Naive thymus-derived CD4-positive, alpha-beta T cell (primary cell): ENCODE measurements at regions of chr1 and their contacts with region 1.

Region 1: GRCh38 chr1:23634842-23635651 is 56.6 kb upstream of the RPL11 start:
- DNase-seq: peak in 8 of 9 donors; percentile 48 to 80 (median 72)
- ATAC-seq: peak; percentile 91
- H3K4me3 ChIP-seq: peak overlapping the region; percentile 42
- H3K4me3 Mint-ChIP-seq: peak overlapping the region; percentile 64 to 81 (median 75)
- H3K27ac ChIP-seq: peak overlapping the region; percentile 69
- H3K27ac Mint-ChIP-seq: peak overlapping the region; percentile 69 to 97 (median 93)
- H3K4me1 ChIP-seq: peaks cover 0 to 14% of the 10 kb centered on the region in 2 donors
- H3K4me1 Mint-ChIP-seq: peaks cover 18 to 52% (median 40%) of the 10 kb centered on the region in 7 donors
- H3K27me3 ChIP-seq: no peaks in the 10 kb centered on the region
- H3K27me3 Mint-ChIP-seq: peaks cover 0 to 4% (median 0%) of the 10 kb centered on the region in 5 donors

Region 2: GRCh38 chr1:23484253-23485001 is 150.6 kb before region 1 on chr1:
- CTCF ChIA-PET with region 1: interaction called, 6 read pairs
- POLR2A ChIA-PET with region 1: interaction called, 3 read pairs
- intact Hi-C with region 1: loop called in 1 of 2 experiments (anchors 5 kb)
- DNase-seq: peak; percentile 76 to 92 (median 90)
- ATAC-seq: peak; percentile 94
- H3K4me3 ChIP-seq: peak overlapping the region; percentile 67
- H3K4me3 Mint-ChIP-seq: peak overlapping the region; percentile 74 to 97 (median 88)
- H3K27ac ChIP-seq: peak overlapping the region; percentile 63
- H3K27ac Mint-ChIP-seq: peak overlapping the region; percentile 65 to 83 (median 76)
- H3K4me1 ChIP-seq: peaks cover 13% of the 10 kb centered on the region in 2 donors
- H3K4me1 Mint-ChIP-seq: peaks cover 12 to 20% (median 15%) of the 10 kb centered on the region in 7 donors
- H3K27me3 ChIP-seq: no peaks in the 10 kb centered on the region
- H3K27me3 Mint-ChIP-seq: peaks cover 0 to 73% (median 13%) of the 10 kb centered on the region in 5 donors

Region 3: GRCh38 chr1:23524716-23525401 is 110.2 kb before region 1 on chr1:
- CTCF ChIA-PET with region 1: interaction called, 14 read pairs
- POLR2A ChIA-PET with region 1: interaction called, 5 read pairs
- intact Hi-C with region 1: no loop called
- DNase-seq: peak in 2 of 9 donors; percentile 16 to 35
- ATAC-seq: peak; percentile 26
- H3K4me3 ChIP-seq: peak overlapping the region; percentile 9
- H3K4me3 Mint-ChIP-seq: peak overlapping the region; percentile 53 to 96 (median 70)
- H3K27ac ChIP-seq: peak overlapping the region; percentile 8
- H3K27ac Mint-ChIP-seq: peak overlapping the region in 4 of 9 donors; percentile 38 to 96 (median 58)
- H3K4me1 ChIP-seq: peaks cover 60% of the 10 kb centered on the region in 2 donors
- H3K4me1 Mint-ChIP-seq: peaks cover 39 to 76% (median 63%) of the 10 kb centered on the region in 7 donors
- H3K27me3 ChIP-seq: no peaks in the 10 kb centered on the region
- H3K27me3 Mint-ChIP-seq: no peaks in the 10 kb centered on the region

Region 4: DNA sequence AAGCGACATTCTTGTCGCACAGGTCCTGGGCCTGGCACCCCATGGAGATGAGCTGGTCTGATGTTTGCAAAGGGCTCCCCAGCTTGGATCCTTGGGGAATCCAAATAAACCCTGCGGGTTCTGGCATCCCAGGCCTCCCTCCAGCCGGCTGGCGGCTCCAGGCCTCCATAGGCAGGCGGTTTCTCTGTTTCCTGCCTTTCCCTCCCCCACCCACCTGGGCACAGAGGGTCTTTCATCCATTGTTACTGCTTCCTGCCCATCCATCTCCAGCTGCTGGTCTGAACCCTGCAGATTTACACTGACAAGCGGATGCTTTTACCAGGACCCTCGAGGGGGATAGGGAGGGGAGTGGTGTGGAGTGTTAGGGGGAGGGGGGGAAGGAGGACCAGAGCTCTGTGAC is 36.6 kb before region 1 on chr1:
- CTCF ChIA-PET with region 1: interaction called, 16 read pairs
- POLR2A ChIA-PET with region 1: interaction called, 71 read pairs
- intact Hi-C with region 1: loop called (anchors 1 to 2 kb)
- DNase-seq: no peak
- ATAC-seq: no peak
- H3K4me3 ChIP-seq: no peak overlapping the region
- H3K4me3 Mint-ChIP-seq: peak overlapping the region in 5 of 10 donors; percentile 6 to 88 (median 69)
- H3K27ac ChIP-seq: peak overlapping the region; percentile 40
- H3K27ac Mint-ChIP-seq: peak overlapping the region in 6 of 9 donors; percentile 3 to 84 (median 72)
- H3K4me1 ChIP-seq: peaks cover 73 to 92% of the 10 kb centered on the region in 2 donors
- H3K4me1 Mint-ChIP-seq: peaks cover 50 to 97% (median 85%) of the 10 kb centered on the region in 7 donors
- H3K27me3 ChIP-seq: no peaks in the 10 kb centered on the region
- H3K27me3 Mint-ChIP-seq: no peaks in the 10 kb centered on the region

Region 5: GRCh38 chr1:23619299-23620188 is 15.5 kb before region 1 on chr1:
- CTCF ChIA-PET with region 1: interaction called, 71 read pairs
- POLR2A ChIA-PET with region 1: interaction called, 145 read pairs
- intact Hi-C with region 1: loop called in 1 of 2 experiments (anchors 1 kb)
- DNase-seq: peak; percentile 58 to 88 (median 84)
- ATAC-seq: peak; percentile 93
- H3K4me3 ChIP-seq: peak overlapping the region; percentile 65
- H3K4me3 Mint-ChIP-seq: peak overlapping the region; percentile 63 to 85 (median 78)
- H3K27ac ChIP-seq: peak overlapping the region; percentile 81
- H3K27ac Mint-ChIP-seq: peak overlapping the region; percentile 84 to 99 (median 97)
- H3K4me1 ChIP-seq: peaks cover 45 to 79% of the 10 kb centered on the region in 2 donors
- H3K4me1 Mint-ChIP-seq: peaks cover 68 to 97% (median 90%) of the 10 kb centered on the region in 7 donors
- H3K27me3 ChIP-seq: no peaks in the 10 kb centered on the region
- H3K27me3 Mint-ChIP-seq: peaks cover 0 to 11% (median 0%) of the 10 kb centered on the region in 5 donors

Region 6: GRCh38 chr1:23916209-23917131 is 281.4 kb after region 1 on chr1:
- CTCF ChIA-PET with region 1: interaction called, 5 read pairs
- POLR2A ChIA-PET with region 1: no interaction called
- intact Hi-C with region 1: loop called in 1 of 2 experiments (anchors 2 kb)
- DNase-seq: peak; percentile 24 to 66 (median 55)
- ATAC-seq: peak; percentile 95
- H3K4me3 ChIP-seq: no peak overlapping the region
- H3K4me3 Mint-ChIP-seq: no peak overlapping the region
- H3K27ac ChIP-seq: no peak overlapping the region
- H3K27ac Mint-ChIP-seq: peak overlapping the region in 2 of 9 donors; percentile 64 to 72
- H3K4me1 ChIP-seq: peaks cover 7 to 8% of the 10 kb centered on the region in 2 donors
- H3K4me1 Mint-ChIP-seq: peaks cover 10 to 41% (median 30%) of the 10 kb centered on the region in 7 donors
- H3K27me3 ChIP-seq: no peaks in the 10 kb centered on the region
- H3K27me3 Mint-ChIP-seq: peaks cover 0 to 2% (median 0%) of the 10 kb centered on the region in 5 donors

Region 7: DNA sequence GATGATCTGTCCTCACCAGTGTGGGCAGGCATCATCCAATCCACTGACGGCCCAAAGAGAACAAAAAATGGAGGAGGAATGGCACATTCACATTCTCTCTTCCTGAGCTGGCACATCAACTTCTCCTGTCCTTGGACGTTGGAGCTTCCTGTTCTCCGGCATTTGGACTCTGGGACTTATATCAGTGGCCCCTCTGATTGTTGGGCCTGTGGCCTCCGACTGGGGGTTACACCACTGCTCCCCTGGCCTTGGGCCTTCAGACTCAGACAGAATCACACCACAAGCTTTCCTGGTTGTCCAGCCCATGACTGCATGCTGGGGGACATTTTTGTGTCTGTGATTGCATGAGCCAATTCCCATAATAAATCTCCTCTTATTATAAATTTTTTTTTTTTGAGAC is 532.0 kb after region 1 on chr1:
- CTCF ChIA-PET with region 1: no interaction called
- POLR2A ChIA-PET with region 1: no interaction called
- intact Hi-C with region 1: no loop called
- DNase-seq: no peak
- ATAC-seq: no peak
- H3K4me3 ChIP-seq: no peak overlapping the region
- H3K4me3 Mint-ChIP-seq: no peak overlapping the region
- H3K27ac ChIP-seq: no peak overlapping the region
- H3K27ac Mint-ChIP-seq: no peak overlapping the region
- H3K4me1 ChIP-seq: no peaks in the 10 kb centered on the region
- H3K4me1 Mint-ChIP-seq: peaks cover 0 to 5% (median 4%) of the 10 kb centered on the region in 7 donors
- H3K27me3 ChIP-seq: no peaks in the 10 kb centered on the region
- H3K27me3 Mint-ChIP-seq: no peaks in the 10 kb centered on the region